K562 (cell line): ENCODE measurements at regions of chr2 and their contacts with region 1.

Region 1: GRCh38 chr2:19369341-19369955 is 11.0 kb upstream of the OSR1 start:
- DNase-seq: no peak
- ATAC-seq: no peak
- H3K4me3 ChIP-seq: no peak overlapping the region
- H3K27ac ChIP-seq: no peak overlapping the region
- H3K4me1 ChIP-seq: no peaks in the 10 kb centered on the region
- H3K27me3 ChIP-seq: no peaks in the 10 kb centered on the region
- CTCF ChIP-seq: no peak
- EP300 ChIP-seq: no peak
- POLR2A ChIP-seq: no peak
- RAD21 ChIP-seq: no peak

Region 2: DNA sequence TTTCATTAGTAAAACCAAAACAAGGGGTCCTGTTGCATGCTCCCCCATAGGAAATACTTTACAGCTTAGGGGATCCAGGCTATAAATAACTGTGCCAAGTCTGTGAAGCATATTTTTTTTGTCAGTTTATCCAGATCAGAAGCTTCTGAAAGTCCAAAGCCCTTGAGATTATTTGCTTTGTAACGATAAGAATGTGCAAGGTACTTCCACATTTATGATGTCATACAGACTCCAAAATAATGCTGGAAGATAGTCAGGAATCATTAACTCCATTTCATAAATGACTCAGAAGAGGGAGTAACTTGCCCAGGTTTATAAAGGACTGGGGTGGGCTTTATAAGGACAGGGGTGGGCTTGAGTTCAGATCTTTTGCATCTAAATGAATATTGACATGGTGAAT is 838.3 kb before region 1 on chr2:
- CTCF ChIA-PET with region 1: no interaction called
- POLR2A ChIA-PET with region 1: no interaction called
- in situ Hi-C with region 1: loop called (anchors 5 kb)
- intact Hi-C with region 1: no loop called
- DNase-seq: no peak
- ATAC-seq: no peak
- H3K4me3 ChIP-seq: no peak overlapping the region
- H3K27ac ChIP-seq: no peak overlapping the region
- H3K4me1 ChIP-seq: no peaks in the 10 kb centered on the region
- H3K27me3 ChIP-seq: peaks cover 0 to 4% of the 10 kb centered on the region in 2 experiments; a peak in 2 of 5 replicates
- CTCF ChIP-seq: no peak
- EP300 ChIP-seq: no peak
- POLR2A ChIP-seq: no peak
- RAD21 ChIP-seq: no peak

Region 3: GRCh38 chr2:19299020-19299419 is 70.4 kb before region 1 on chr2:
- CTCF ChIA-PET with region 1: no interaction called
- POLR2A ChIA-PET with region 1: no interaction called
- in situ Hi-C with region 1: no loop called
- intact Hi-C with region 1: no loop called
- DNase-seq: no peak
- ATAC-seq: no peak
- H3K4me3 ChIP-seq: no peak overlapping the region
- H3K27ac ChIP-seq: no peak overlapping the region
- H3K4me1 ChIP-seq: no peaks in the 10 kb centered on the region
- H3K27me3 ChIP-seq: no peaks in the 10 kb centered on the region
- CTCF ChIP-seq: no peak
- EP300 ChIP-seq: no peak
- POLR2A ChIP-seq: no peak
- RAD21 ChIP-seq: no peak